ENCODE measurements at regions of chr22 and their contacts with region 1.

Region 1: DNA sequence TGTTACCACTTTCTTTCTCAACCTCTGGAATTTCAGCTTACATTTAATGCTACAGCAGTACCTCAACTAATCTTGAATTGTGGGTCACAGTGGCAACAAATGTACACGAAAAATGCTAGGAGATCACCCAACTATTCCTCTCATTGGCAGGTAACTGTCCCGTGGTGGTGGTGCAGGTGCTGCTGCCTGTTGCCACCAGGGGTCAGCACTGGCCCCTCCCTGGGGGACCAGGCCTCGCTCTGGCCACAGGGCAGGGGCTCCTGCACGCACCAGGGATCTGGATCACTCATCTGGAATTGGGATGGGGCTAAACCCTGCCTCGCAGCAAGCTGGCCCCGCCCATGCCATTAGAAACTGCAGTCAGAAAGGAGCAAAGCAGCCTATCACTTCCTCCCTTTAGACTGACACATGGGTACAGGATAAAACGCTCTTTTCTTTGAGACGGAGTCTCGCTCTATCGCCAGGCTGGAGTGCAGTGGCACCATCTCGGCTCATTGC is 6.9 kb upstream of the POLDIP3 start:
- DNase-seq: peak; percentile 76 to 90
- H3K4me3 ChIP-seq: no peak overlapping the region
- H3K4me1 ChIP-seq: no peaks in the 10 kb centered on the region
- H3K27me3 ChIP-seq: no peaks in the 10 kb centered on the region

Region 2: DNA sequence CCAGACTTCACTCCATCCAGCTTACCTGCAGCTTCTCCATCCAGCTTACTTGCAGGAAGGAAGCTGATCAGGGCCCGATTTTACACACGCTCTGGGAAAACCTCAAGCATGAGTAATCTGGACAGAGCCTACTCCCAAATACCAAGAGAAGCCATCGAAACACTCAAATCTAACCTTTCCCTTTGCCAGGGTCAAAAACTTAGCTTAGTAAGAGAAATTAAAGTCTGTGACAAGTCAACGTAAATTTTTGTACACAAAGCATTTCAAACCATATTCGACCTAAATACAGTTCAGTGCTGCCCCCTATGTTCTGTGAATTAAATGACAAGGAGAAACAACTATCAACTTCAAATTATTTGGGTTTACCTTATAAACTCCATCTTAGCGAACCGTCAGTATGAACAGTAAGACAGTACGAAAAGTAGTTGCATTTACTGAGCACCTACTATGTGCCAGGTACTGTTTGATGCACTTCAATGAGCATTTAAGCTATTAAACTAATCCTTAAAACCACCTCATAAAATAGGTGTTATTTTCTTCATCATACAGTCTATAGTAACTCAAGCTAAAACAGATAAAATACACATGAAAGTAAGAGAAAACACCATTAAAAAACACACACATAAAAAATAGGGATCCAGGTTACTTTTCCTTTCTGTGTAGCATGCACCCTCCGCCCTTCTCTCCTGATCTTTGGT is 198.7 kb after region 1 on chr22:
- in situ Hi-C with region 1: loop called (anchors 5 kb)
- DNase-seq: peak; percentile 26 to 62
- H3K4me3 ChIP-seq: no peak overlapping the region
- H3K4me1 ChIP-seq: 0 out of 2 replicates have a peak, but pooled peaks cover 5% of the 10 kb centered on the region
- H3K27me3 ChIP-seq: no peaks in the 10 kb centered on the region

Measured in HAP-1 (cell line).